ENCODE measurements at regions of chr13 and their contacts with region 1.

Region 1: DNA sequence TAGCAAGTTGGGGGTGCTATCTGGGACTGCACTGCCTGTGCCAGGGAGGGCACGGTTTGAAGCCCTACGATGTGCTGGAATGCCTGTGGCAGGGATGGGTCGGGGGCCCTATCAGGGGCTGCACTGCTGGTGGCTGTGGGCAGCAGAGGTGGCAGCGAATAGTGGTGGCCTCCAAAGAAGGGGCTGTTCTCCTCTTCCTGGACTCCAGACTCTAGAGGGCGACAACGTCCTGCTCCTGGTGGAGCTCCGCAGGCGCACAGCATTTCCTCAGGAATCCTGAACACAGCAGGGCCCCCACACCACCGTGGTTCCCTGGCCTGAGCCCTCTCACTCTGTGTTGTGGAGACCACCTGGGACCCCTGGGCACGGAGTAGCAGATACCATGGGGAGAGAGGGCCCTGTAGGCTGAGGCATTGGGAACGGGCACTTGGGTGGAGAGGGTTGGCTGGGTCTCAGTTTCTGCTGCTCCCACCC is 145.6 kb downstream of the TNFRSF19 start:
- DNase-seq: peak; percentile 78
- ATAC-seq: peak; percentile 80
- H3K4me3 ChIP-seq: peak overlapping the region; percentile 60
- H3K27ac ChIP-seq: peak overlapping the region; percentile 30; the same call in 1 of the 2 replicates
- H3K4me1 ChIP-seq: peaks cover 23% of the 10 kb centered on the region
- H3K27me3 ChIP-seq: no peaks in the 10 kb centered on the region
- CTCF ChIP-seq: peak; percentile 77

Region 2: GRCh38 chr13:23752111-23753001 is 36.6 kb after region 1 on chr13:
- CTCF ChIA-PET with region 1: no interaction called
- POLR2A ChIA-PET with region 1: interaction called, 3 read pairs
- intact Hi-C with region 1: loop called (anchors 5 kb)
- DNase-seq: peak; percentile 35
- ATAC-seq: no peak
- H3K4me3 ChIP-seq: no peak overlapping the region
- H3K27ac ChIP-seq: peak overlapping the region; percentile 100
- H3K4me1 ChIP-seq: peaks cover 72% of the 10 kb centered on the region
- H3K27me3 ChIP-seq: no peaks in the 10 kb centered on the region
- CTCF ChIP-seq: no peak

Region 3: GRCh38 chr13:23871616-23872220 is 155.9 kb after region 1 on chr13:
- CTCF ChIA-PET with region 1: interaction called, 13 read pairs
- POLR2A ChIA-PET with region 1: no interaction called
- intact Hi-C with region 1: loop called (anchors 1 kb)
- DNase-seq: peak; percentile 58
- ATAC-seq: no peak
- H3K4me3 ChIP-seq: no peak overlapping the region
- H3K27ac ChIP-seq: peak overlapping the region; percentile 62
- H3K4me1 ChIP-seq: peaks cover 44% of the 10 kb centered on the region
- H3K27me3 ChIP-seq: no peaks in the 10 kb centered on the region
- CTCF ChIP-seq: peak; percentile 74